ENCODE measurements at regions of chr6 and their contacts with region 1.

Region 1: DNA sequence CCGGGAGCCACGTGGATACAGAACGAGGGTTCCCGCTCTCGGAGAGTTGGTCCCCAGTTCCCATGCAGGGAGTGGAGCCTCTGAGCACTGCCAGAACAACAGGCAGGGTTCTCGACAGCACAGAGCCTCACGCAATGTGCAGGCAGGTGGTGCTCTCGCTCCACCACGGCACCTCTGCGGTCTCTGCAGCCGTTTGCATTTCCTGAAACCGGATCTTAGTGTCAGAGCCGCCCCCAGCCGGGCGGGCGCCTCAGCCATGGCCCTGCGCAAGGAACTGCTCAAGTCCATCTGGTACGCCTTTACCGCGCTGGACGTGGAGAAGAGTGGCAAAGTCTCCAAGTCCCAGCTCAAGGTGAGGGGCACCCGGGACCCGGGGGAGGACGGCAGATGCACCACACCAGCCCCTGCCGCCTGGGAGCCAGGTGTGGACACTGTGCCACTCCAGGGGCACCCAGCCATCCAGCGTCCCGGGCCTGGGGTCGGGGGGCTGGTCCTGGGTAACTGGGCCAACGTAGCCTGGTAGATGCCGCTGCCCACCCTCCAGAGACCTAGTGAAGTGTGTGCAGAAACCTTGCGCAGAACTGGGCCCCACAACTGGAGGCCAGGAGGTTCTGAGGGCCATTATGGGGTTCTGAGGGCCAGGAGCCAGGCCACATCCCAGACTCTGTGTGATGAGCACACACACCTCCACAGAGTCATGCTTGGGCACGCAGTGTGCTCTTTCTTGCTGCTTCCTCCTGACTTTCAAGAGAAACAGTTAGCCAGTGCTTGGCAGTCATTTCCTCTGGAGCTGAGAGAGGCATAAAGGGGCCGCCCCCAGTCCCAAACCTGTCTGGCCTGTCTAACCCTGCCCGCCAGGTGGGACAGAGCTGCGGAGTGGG is at the start of gene DEF6:
- DNase-seq: peak; percentile 95
- H3K4me3 Mint-ChIP-seq: peak within 1 kb of the TSS; percentile 86
- H3K27ac Mint-ChIP-seq: peak within 1 kb of the TSS; percentile 96
- H3K4me1 Mint-ChIP-seq: peaks cover 45% of the 10 kb centered on the region
- H3K27me3 Mint-ChIP-seq: no peaks in the 10 kb centered on the region
- total RNA-seq, gene DEF6: 103 TPM

Region 2: GRCh38 chr6:35327349-35328027 is 29.6 kb after region 1 on chr6:
- CTCF ChIA-PET with region 1: interaction called, 232 read pairs
- POLR2A ChIA-PET with region 1: interaction called, 6 read pairs
- intact Hi-C with region 1: loop called (anchors 1 kb)
- DNase-seq: peak; percentile 87
- H3K4me3 Mint-ChIP-seq: no peak overlapping the region
- H3K27ac Mint-ChIP-seq: peak overlapping the region; percentile 67
- H3K4me1 Mint-ChIP-seq: peaks cover 18% of the 10 kb centered on the region
- H3K27me3 Mint-ChIP-seq: no peaks in the 10 kb centered on the region

Region 3: GRCh38 chr6:35370124-35370741 is 72.4 kb after region 1 on chr6:
- CTCF ChIA-PET with region 1: no interaction called
- POLR2A ChIA-PET with region 1: no interaction called
- intact Hi-C with region 1: loop called (anchors 2 kb)
- DNase-seq: peak; percentile 73
- H3K4me3 Mint-ChIP-seq: peak overlapping the region; percentile 27
- H3K27ac Mint-ChIP-seq: peak overlapping the region; percentile 91
- H3K4me1 Mint-ChIP-seq: peaks cover 59% of the 10 kb centered on the region
- H3K27me3 Mint-ChIP-seq: no peaks in the 10 kb centered on the region

Region 4: GRCh38 chr6:35468181-35468979 is 170.5 kb after region 1 on chr6 and contains the start of gene RPL10A:
- CTCF ChIA-PET with region 1: interaction called, 36 read pairs
- POLR2A ChIA-PET with region 1: interaction called, 8 read pairs
- intact Hi-C with region 1: loop called (anchors 1 kb)
- DNase-seq: peak; percentile 97
- H3K4me3 Mint-ChIP-seq: peak within 1 kb of the TSS; percentile 95
- H3K27ac Mint-ChIP-seq: peak within 1 kb of the TSS; percentile 97
- H3K4me1 Mint-ChIP-seq: peaks cover 36% of the 10 kb centered on the region
- H3K27me3 Mint-ChIP-seq: no peaks in the 10 kb centered on the region
- total RNA-seq, gene RPL10A: 2,144 to 2,205 TPM